Endothelial cell of umbilical vein (primary cell): ENCODE measurements at regions of chr7 and their contacts with region 1.

Region 1: GRCh38 chr7:79241288-79242055 is 212.0 kb downstream of the MAGI2 start:
- DNase-seq: no peak
- H3K4me3 ChIP-seq: no peak overlapping the region
- H3K27ac ChIP-seq: no peak overlapping the region
- H3K4me1 ChIP-seq: no peaks in the 10 kb centered on the region
- H3K27me3 ChIP-seq: no peaks in the 10 kb centered on the region
- CTCF ChIP-seq: no peak
- POLR2A ChIP-seq: no peak

Region 2: DNA sequence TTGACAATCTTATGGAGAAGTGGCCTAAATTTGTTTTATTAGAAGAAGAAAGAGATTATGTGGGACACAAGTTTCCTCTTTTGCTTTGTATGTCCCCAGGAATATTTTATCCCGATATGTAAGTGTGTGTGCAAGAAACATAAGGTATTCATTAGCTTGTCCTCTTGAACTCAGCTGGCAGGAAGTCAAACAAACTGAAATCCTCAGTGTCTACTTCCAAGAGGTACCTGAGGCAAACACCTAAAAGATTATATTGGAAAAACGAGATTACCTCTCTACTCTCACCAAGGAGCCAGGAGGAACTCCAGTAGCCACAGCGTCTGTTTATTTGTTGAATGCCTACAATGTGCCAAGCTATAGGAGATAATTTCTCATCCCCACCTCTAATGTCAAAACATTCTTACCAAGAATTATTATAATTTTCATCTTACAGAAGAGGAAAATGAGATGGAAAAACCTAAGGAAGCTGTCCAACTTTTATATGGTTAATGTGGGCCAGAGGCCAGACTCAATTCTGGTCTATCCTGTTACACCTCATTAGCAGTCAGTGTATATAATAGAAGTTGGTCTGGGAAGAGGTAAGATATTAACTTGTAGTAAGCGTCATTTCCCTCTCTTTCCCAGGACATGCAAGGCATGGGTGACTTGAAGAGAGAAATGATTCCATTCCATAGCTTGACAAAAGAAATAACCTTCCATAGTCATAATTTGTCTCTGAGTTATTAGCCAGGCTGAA is 480.7 kb before region 1 on chr7:
- CTCF ChIA-PET with region 1: no interaction called
- POLR2A ChIA-PET with region 1: no interaction called
- dilution Hi-C with region 1: no loop called
- intact Hi-C with region 1: no loop called
- DNase-seq: no peak
- H3K4me3 ChIP-seq: no peak overlapping the region
- H3K27ac ChIP-seq: no peak overlapping the region
- H3K4me1 ChIP-seq: no peaks in the 10 kb centered on the region
- H3K27me3 ChIP-seq: no peaks in the 10 kb centered on the region
- CTCF ChIP-seq: no peak
- POLR2A ChIP-seq: no peak

Region 3: DNA sequence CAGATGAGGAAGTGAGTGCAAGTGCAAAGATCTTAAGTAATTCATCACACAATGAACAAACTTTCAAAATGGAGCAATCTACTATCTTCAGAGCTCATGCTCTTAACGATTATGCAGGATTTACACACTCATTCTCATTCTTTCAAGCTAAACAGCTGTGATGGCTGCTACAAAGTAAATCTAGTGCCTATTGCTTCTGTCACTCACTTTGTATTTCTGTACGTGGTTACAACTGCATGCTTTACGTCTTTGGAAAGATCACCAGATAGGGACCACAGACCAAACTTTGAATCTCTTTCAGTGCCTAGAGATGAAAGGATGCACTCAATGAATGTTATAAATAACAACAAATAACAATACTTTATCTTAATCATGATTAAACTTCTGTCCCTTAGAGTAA is 17.4 kb after region 1 on chr7:
- CTCF ChIA-PET with region 1: no interaction called
- POLR2A ChIA-PET with region 1: no interaction called
- dilution Hi-C with region 1: no loop called
- intact Hi-C with region 1: loop called (anchors 1 kb)
- DNase-seq: no peak
- H3K4me3 ChIP-seq: no peak overlapping the region
- H3K27ac ChIP-seq: no peak overlapping the region
- H3K4me1 ChIP-seq: no peaks in the 10 kb centered on the region
- H3K27me3 ChIP-seq: no peaks in the 10 kb centered on the region
- CTCF ChIP-seq: no peak
- POLR2A ChIP-seq: no peak

Region 4: DNA sequence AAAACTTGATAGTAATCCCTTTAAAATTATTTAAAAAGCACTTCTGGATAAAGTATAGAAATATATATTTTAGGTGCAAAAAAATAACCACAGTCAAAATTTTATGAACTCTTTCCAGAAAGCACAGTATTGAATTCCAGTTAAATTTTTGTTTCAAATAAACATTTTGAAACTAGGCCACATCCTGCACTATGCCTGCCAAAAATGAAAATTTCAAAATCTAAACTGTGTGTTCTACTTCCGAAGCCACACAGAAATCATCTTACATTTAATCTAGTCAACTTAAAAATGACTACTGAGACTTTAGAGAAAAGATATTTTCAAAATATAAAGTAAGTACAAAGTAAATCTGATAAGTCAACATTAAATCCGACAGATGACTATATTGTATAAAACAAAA is 162.0 kb after region 1 on chr7:
- CTCF ChIA-PET with region 1: no interaction called
- POLR2A ChIA-PET with region 1: no interaction called
- dilution Hi-C with region 1: no loop called
- intact Hi-C with region 1: no loop called
- DNase-seq: no peak
- H3K4me3 ChIP-seq: no peak overlapping the region
- H3K27ac ChIP-seq: no peak overlapping the region
- H3K4me1 ChIP-seq: peaks cover 9% of the 10 kb centered on the region
- H3K27me3 ChIP-seq: no peaks in the 10 kb centered on the region
- CTCF ChIP-seq: no peak
- POLR2A ChIP-seq: no peak